Vagina (tissue), 2 donors: ENCODE measurements at regions of chr2 and their contacts with region 1.

Region 1: DNA sequence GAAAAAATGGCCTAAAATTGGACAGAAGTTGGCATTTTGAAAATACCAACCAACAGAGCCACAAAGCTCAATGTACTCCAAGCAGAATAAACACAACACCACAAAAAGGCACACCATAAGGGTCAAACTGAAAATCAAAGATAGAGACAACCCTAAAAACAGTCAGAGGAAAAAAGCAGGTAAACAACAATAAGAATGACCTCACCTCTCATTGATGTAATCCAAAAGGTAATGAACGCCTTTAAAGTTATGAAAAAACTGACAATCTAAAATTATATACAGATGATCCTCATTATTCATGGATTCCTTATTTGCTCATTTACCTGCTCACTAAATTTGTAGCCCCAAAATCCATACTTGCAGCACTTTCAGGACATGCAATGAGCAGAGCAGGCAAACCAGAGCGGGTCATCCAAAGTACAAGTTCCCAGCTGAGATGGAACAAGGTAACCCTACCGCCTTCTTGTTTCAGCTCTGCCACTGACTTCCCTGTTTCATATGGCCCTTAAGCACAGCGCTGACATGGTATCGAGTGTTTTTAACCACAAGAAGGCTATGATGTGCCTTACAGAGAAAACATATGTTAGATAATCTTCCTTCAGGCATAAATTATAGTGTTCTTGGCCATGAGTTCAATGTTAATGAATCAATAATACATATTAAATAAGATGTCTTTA is 17.0 kb downstream of the RTN4 start:
- DNase-seq: no peak
- H3K4me3 ChIP-seq: no peak overlapping the region
- H3K27ac ChIP-seq: no peak overlapping the region
- H3K4me1 ChIP-seq: peaks cover 47% of the 10 kb centered on the region
- H3K27me3 ChIP-seq: no peaks in the 10 kb centered on the region
- CTCF ChIP-seq: no peak
- POLR2A ChIP-seq: no peak

Region 2: GRCh38 chr2:54915101-54915500 is 118.1 kb before region 1 on chr2:
- intact Hi-C with region 1: loop called (anchors 10 kb)
- DNase-seq: no peak
- H3K4me3 ChIP-seq: no peak overlapping the region
- H3K27ac ChIP-seq: no peak overlapping the region
- H3K4me1 ChIP-seq: no peaks in the 10 kb centered on the region
- H3K27me3 ChIP-seq: no peaks in the 10 kb centered on the region
- CTCF ChIP-seq: no peak
- POLR2A ChIP-seq: no peak